Colonic mucosa (tissue), 4 donors: ENCODE measurements at regions of chr19 and their contacts with region 1.

Region 1: GRCh38 chr19:4791170-4792018 is at the start of gene FEM1A:
- DNase-seq: peak; percentile 99
- H3K4me3 ChIP-seq: peak within 1 kb of the TSS; percentile 97
- H3K27ac ChIP-seq: peak within 1 kb of the TSS; percentile 86
- H3K4me1 ChIP-seq: peaks cover 10% of the 10 kb centered on the region
- H3K27me3 ChIP-seq: no peaks in the 10 kb centered on the region
- CTCF ChIP-seq: peak; percentile 99
- total RNA-seq, gene FEM1A: 10.4 to 13.3 TPM

Region 2: GRCh38 chr19:4732680-4733114 is 58.7 kb before region 1 on chr19:
- intact Hi-C with region 1: loop called (anchors 2 kb)
- DNase-seq: peak; percentile 47
- H3K4me3 ChIP-seq: no peak overlapping the region
- H3K27ac ChIP-seq: no peak overlapping the region
- H3K4me1 ChIP-seq: no peaks in the 10 kb centered on the region
- H3K27me3 ChIP-seq: no peaks in the 10 kb centered on the region
- CTCF ChIP-seq: peak; percentile 60

Region 3: DNA sequence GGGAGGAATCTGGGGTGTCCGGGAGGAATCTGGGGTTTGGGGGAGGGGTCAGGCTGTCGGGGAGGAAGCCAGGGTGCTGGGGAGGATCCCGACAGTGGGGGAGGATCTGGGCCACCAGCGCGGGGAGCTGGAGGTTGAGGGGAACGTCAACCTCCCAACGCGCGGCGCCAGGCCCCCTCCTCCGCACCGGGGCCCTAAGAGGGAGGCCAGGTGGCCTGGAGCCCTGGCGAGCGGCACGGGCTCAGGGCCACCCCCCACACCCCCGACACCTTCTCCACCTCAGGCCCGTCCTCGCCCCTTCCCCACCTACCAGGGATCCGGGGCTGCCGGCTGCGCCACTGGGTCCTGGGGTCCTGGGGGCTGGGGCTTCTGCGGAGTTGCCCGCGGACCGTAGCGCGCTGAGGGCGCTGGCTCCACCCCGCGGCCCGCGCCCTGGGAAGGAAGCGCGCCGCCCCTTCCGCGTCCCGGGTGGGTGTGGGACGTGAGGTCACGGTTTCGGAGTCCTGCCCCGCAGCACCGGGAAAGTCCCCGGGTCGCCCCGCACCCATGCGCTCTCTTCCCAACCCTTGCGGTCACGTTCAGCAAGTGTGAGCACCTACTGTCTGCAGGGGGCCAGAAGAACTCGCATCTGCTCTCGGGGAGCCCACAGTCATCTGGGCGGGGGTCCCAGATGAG is 40.0 kb after region 1 on chr19 and contains the start of gene TICAM1:
- intact Hi-C with region 1: no loop called
- DNase-seq: peak; percentile 87
- H3K4me3 ChIP-seq: peak within 1 kb of the TSS; percentile 74
- H3K27ac ChIP-seq: peak within 1 kb of the TSS; percentile 88
- H3K4me1 ChIP-seq: peaks cover 6% of the 10 kb centered on the region
- H3K27me3 ChIP-seq: no peaks in the 10 kb centered on the region
- CTCF ChIP-seq: no peak
- total RNA-seq, gene TICAM1: 14.0 to 27.2 TPM